ENCODE measurements at regions of chr15 and their contacts with region 1.

Region 1: DNA sequence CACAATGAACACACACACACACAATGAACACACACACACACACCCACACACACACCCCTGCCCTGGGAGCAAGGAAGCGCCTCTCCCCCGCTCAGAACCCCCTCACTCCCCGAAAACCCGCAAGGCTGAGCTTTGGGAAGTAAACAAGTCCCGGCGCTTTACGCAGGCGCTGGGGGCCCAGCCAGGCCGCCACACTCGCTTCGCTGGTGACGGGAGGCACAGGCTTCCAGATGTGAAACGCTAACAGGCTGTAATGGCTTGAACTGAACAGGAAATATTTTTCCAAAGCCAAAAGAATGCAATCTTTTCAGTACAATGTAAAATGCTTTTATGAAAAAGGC is 122.7 kb upstream of the IGF1R start:
- DNase-seq: no peak
- ATAC-seq: no peak
- H3K4me3 ChIP-seq: no peak overlapping the region
- H3K27ac ChIP-seq: no peak overlapping the region
- H3K4me1 ChIP-seq: no peaks in the 10 kb centered on the region
- H3K27me3 ChIP-seq: peaks cover 4% of the 10 kb centered on the region
- CTCF ChIP-seq: no peak

Region 2: GRCh38 chr15:98369081-98369716 is 156.4 kb before region 1 on chr15:
- intact Hi-C with region 1: no loop called
- DNase-seq: no peak
- ATAC-seq: no peak
- H3K4me3 ChIP-seq: no peak overlapping the region
- H3K27ac ChIP-seq: no peak overlapping the region
- H3K4me1 ChIP-seq: no peaks in the 10 kb centered on the region
- H3K27me3 ChIP-seq: no peaks in the 10 kb centered on the region
- CTCF ChIP-seq: no peak

Region 3: DNA sequence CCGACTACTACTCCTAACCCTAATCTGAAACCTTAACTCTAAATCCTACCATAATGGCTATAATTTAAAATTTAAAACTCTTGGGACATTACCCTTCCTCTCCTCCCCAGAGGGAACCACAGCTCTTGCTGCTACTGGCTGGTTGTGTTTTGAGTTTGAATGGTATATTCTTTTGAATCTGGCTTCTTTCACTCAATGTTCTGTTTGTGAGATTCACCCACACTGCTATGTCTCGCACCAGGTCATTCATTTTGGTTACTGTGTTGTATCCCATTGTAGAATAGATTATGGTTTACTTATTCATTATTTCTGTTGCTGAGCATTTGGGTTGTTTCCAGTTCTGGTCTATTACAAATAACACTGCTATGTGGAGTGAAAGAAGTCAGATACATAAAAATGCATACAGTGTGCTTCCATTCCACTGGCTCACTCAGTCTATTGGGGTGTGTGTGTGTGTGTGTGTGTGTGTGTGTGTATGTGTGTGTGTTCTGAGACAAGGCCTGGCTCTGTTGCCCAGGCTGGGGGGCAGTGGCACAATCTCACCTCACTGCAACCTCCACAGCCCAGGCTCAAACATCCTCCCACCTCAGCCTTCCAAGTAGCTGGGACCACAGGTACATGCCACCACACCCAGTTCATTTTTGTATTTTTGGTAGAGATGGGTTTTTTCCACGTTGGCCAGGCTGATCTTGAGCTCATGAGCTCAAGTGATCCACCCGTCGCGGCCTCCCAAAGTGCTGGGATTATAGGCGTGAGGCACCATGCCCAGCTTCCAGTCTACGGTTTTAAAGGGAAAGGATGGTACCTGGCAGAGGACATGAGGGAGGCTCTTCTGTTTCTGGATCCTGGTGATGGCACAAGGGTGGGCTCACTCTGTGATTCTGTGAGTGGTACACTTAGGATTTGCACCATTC is 560.0 kb after region 1 on chr15:
- intact Hi-C with region 1: loop called (anchors 10 kb)
- DNase-seq: no peak
- ATAC-seq: no peak
- H3K4me3 ChIP-seq: no peak overlapping the region
- H3K27ac ChIP-seq: no peak overlapping the region
- H3K4me1 ChIP-seq: no peaks in the 10 kb centered on the region
- H3K27me3 ChIP-seq: no peaks in the 10 kb centered on the region
- CTCF ChIP-seq: no peak

Measured in upper lobe of right lung (tissue), 1 donor.